ENCODE measurements at regions of chr7 and their contacts with region 1.

Region 1: DNA sequence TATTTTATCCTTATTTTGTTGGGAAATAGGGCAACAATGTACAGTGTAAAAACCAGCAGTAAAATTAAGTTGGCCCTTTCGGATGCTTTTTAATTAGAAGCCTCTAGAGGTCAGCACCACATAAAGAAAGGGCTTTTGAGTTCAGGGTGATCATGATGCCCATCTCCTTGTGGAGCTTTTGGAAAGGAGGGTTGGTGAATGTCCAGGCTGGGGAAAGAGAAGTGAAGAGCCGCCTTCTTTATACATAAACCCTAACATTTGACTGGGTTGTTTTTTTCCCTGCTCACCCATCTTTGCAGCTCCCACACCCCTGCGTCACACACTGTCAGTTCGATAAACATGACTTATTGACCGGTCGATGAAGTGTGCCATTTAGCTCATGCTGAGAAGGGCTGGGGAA is 29.8 kb downstream of the MTURN start:
- DNase-seq: no peak
- ATAC-seq: peak; percentile 65
- H3K4me3 ChIP-seq: no peak overlapping the region
- H3K27ac ChIP-seq: no peak overlapping the region
- H3K4me1 ChIP-seq: peaks cover 27% of the 10 kb centered on the region
- H3K27me3 ChIP-seq: no peaks in the 10 kb centered on the region
- CTCF ChIP-seq: peak; percentile 47 to 81 (median 71)
- EP300 ChIP-seq: no peak
- POLR2A ChIP-seq: no peak
- RAD21 ChIP-seq: peak; percentile 97

Region 2: DNA sequence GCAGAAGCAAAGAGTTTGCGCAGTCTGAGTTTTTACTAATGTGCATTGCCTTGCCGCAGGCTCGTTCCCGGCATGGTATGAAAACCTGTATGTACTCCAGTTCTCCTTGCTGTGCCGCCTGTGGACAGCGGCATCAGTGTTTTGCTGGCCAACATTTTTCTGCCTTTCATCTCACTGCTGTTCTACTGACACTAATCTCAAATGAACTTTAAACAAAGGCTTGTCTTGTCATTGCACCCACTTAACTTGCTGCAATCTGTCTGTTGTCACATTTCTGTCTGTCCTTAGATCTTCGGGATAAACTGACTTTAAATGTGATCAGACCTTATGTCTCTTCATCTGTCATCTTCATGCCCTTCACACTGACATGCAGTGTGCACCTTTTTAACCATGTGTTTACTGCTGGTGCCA is 48.1 kb after region 1 on chr7:
- CTCF ChIA-PET with region 1: interaction called, 4 read pairs
- POLR2A ChIA-PET with region 1: interaction called, 4 read pairs
- RAD21 ChIA-PET with region 1: interaction called, 4 read pairs
- SMC1A ChIA-PET with region 1: interaction called, 4 read pairs
- in situ Hi-C with region 1: no loop called
- intact Hi-C with region 1: loop called (anchors 1 kb)
- DNase-seq: no peak
- ATAC-seq: no peak
- H3K4me3 ChIP-seq: no peak overlapping the region
- H3K27ac ChIP-seq: no peak overlapping the region
- H3K4me1 ChIP-seq: peaks cover 12% of the 10 kb centered on the region; the same call in 1 of the 2 replicates
- H3K27me3 ChIP-seq: no peaks in the 10 kb centered on the region
- CTCF ChIP-seq: no peak
- EP300 ChIP-seq: no peak
- POLR2A ChIP-seq: no peak
- RAD21 ChIP-seq: no peak

Region 3: GRCh38 chr7:30268586-30268985 is 104.0 kb after region 1 on chr7:
- CTCF ChIA-PET with region 1: interaction called, 182 read pairs
- POLR2A ChIA-PET with region 1: interaction called, 3 read pairs
- RAD21 ChIA-PET with region 1: interaction called, 71 read pairs
- SMC1A ChIA-PET with region 1: interaction called, 148 read pairs
- in situ Hi-C with region 1: no loop called
- intact Hi-C with region 1: no loop called
- DNase-seq: no peak
- ATAC-seq: no peak
- H3K4me3 ChIP-seq: no peak overlapping the region
- H3K27ac ChIP-seq: no peak overlapping the region
- H3K4me1 ChIP-seq: no peaks in the 10 kb centered on the region
- H3K27me3 ChIP-seq: no peaks in the 10 kb centered on the region
- CTCF ChIP-seq: no peak
- EP300 ChIP-seq: no peak
- POLR2A ChIP-seq: no peak
- RAD21 ChIP-seq: no peak

Region 4: DNA sequence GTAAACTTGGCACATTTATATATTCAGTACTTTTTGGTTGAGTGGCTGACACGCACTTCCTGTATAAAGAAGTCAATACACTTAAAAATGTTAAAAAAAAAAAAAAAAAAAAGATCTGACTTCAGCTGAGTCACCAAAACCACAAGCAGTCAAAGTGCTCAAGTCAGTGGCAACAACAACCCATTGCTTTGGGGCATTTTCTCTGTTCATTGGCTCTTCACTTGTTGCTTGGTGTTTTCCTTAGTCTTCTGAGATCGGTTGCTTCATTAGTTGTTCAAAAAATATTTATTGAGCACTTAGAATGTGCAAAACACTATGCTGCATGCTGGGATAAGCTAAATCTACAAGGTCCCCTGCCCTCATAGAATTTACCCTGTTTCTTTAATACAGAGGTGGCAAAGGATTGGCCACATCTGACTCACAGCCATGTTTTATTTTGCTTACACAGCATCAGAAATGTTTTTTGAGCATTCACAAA is 183.6 kb after region 1 on chr7:
- CTCF ChIA-PET with region 1: interaction called, 44 read pairs
- POLR2A ChIA-PET with region 1: no interaction called
- RAD21 ChIA-PET with region 1: interaction called, 43 read pairs
- SMC1A ChIA-PET with region 1: interaction called, 74 read pairs
- in situ Hi-C with region 1: no loop called
- intact Hi-C with region 1: loop called (anchors 2 kb)
- DNase-seq: peak; percentile 85
- ATAC-seq: peak; percentile 92
- H3K4me3 ChIP-seq: peak overlapping the region; percentile 4; the same call in 1 of the 2 replicates
- H3K27ac ChIP-seq: peak overlapping the region; percentile 83
- H3K4me1 ChIP-seq: peaks cover 23% of the 10 kb centered on the region; the same call in 1 of the 2 replicates
- H3K27me3 ChIP-seq: no peaks in the 10 kb centered on the region
- CTCF ChIP-seq: no peak
- EP300 ChIP-seq: peak; percentile 56 to 72; a peak in 2 of 4 replicates
- POLR2A ChIP-seq: no peak
- RAD21 ChIP-seq: no peak

Region 5: GRCh38 chr7:30445770-30446169 is 281.2 kb after region 1 on chr7:
- CTCF ChIA-PET with region 1: interaction called, 4 read pairs
- POLR2A ChIA-PET with region 1: no interaction called
- RAD21 ChIA-PET with region 1: interaction called, 6 read pairs
- SMC1A ChIA-PET with region 1: interaction called, 6 read pairs
- in situ Hi-C with region 1: no loop called
- intact Hi-C with region 1: loop called (anchors 5 kb)
- DNase-seq: peak; percentile 82
- ATAC-seq: peak; percentile 99
- H3K4me3 ChIP-seq: no peak overlapping the region
- H3K27ac ChIP-seq: no peak overlapping the region
- H3K4me1 ChIP-seq: peaks cover 4% of the 10 kb centered on the region
- H3K27me3 ChIP-seq: no peaks in the 10 kb centered on the region
- CTCF ChIP-seq: peak; percentile 68 to 71 (median 70)
- EP300 ChIP-seq: peak in 1 of 2 experiments; percentile 60; a peak in 2 of 4 replicates
- POLR2A ChIP-seq: no peak
- RAD21 ChIP-seq: peak; percentile 81

Measured in GM12878 (cell line).